Common myeloid progenitor, CD34-positive (primary cell): ENCODE measurements at regions of chr13 and their contacts with region 1.

Region 1: GRCh38 chr13:99442273-99442895 is 58.9 kb upstream of the TM9SF2 start:
- DNase-seq: peak; percentile 53 to 78 (median 71)
- H3K4me3 ChIP-seq: no peak overlapping the region
- H3K27ac ChIP-seq: no peak overlapping the region
- H3K4me1 ChIP-seq: peaks cover 0 to 2% (median 0%) of the 10 kb centered on the region in 4 experiments
- H3K27me3 ChIP-seq: peaks cover 0 to 3% (median 0%) of the 10 kb centered on the region in 5 experiments

Region 2: GRCh38 chr13:99516153-99516929 is 74.0 kb after region 1 on chr13:
- CTCF ChIA-PET with region 1: interaction called, 16 read pairs
- POLR2A ChIA-PET with region 1: no interaction called
- DNase-seq: no peak
- H3K4me3 ChIP-seq: no peak overlapping the region
- H3K27ac ChIP-seq: no peak overlapping the region
- H3K4me1 ChIP-seq: peaks cover 0 to 3% (median 1%) of the 10 kb centered on the region in 4 experiments
- H3K27me3 ChIP-seq: no peaks in the 10 kb centered on the region